Endothelial cell of umbilical vein (primary cell): ENCODE measurements at regions of chr6 and their contacts with region 1.

Region 1: DNA sequence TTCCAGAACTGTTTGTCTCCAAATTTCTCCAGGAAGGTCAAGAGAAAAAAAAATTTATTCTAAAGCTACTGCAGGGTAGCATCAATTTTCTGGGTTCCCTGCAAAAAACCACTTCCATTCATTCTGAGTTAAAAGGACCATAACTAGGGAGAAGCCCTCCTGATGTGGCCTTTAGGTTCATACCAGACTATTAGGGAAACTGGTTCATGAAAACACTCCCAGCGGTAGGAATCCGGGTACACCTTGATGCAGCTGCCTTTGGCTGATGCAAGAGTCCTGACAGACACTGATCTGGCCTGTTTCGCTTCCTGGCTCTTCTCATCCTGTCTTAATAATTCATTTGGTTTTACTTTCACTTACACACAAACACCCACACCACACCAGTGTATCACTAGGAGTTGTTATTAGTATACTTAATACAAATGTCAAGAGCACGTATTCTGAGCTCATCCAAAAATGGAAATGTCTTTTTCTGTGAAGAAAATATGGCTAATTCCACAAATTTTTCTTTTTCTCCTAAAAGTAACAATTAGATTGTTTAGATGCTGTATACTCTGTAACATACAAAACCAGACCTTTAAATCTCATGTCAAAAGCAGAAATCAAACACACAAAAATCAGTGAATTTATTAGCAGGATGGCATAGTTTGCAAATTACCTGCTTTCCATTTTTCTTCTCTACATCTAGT is 38.4 kb upstream of the ARHGAP18 start:
- DNase-seq: peak; percentile 28
- H3K4me3 ChIP-seq: no peak overlapping the region
- H3K27ac ChIP-seq: peak overlapping the region; percentile 80
- H3K4me1 ChIP-seq: peaks cover 53% of the 10 kb centered on the region
- H3K27me3 ChIP-seq: no peaks in the 10 kb centered on the region
- CTCF ChIP-seq: no peak
- POLR2A ChIP-seq: no peak

Region 2: GRCh38 chr6:129490521-129491245 is 257.7 kb before region 1 on chr6:
- CTCF ChIA-PET with region 1: no interaction called
- POLR2A ChIA-PET with region 1: no interaction called
- dilution Hi-C with region 1: no loop called
- intact Hi-C with region 1: loop called (anchors 2 kb)
- DNase-seq: peak; percentile 95
- H3K4me3 ChIP-seq: peak overlapping the region; percentile 11 to 83 (median 41)
- H3K27ac ChIP-seq: peak overlapping the region; percentile 99
- H3K4me1 ChIP-seq: peaks cover 51% of the 10 kb centered on the region
- H3K27me3 ChIP-seq: no peaks in the 10 kb centered on the region
- CTCF ChIP-seq: no peak
- POLR2A ChIP-seq: peak; percentile 81

Region 3: DNA sequence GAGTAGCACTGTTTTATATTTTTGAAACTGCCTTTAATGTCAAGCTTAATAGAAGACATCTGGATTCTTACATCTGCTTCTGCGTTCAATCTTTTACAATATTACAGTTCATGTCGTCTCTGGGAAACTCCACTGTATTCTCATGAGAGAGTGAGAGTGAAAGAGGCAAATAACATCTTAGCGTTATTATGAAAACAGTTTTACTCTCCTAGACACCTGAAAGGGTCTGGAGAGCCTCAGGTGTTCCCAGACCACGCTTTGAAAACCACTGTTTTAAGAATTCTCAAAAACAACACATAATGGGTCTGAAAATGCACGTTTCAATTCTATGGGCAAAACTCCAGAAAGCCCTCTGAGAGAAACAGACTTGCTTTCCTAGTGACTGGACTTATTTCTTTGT is 101.7 kb before region 1 on chr6:
- CTCF ChIA-PET with region 1: no interaction called
- POLR2A ChIA-PET with region 1: no interaction called
- dilution Hi-C with region 1: no loop called
- intact Hi-C with region 1: loop called (anchors 1 kb)
- DNase-seq: no peak
- H3K4me3 ChIP-seq: no peak overlapping the region
- H3K27ac ChIP-seq: peak overlapping the region; percentile 98
- H3K4me1 ChIP-seq: peaks cover 81% of the 10 kb centered on the region
- H3K27me3 ChIP-seq: no peaks in the 10 kb centered on the region
- CTCF ChIP-seq: no peak
- POLR2A ChIP-seq: no peak

Region 4: GRCh38 chr6:129709769-129710449 is 38.4 kb before region 1 on chr6 and contains the start of gene ARHGAP18:
- CTCF ChIA-PET with region 1: interaction called, 9 read pairs
- POLR2A ChIA-PET with region 1: interaction called, 4 read pairs
- dilution Hi-C with region 1: no loop called
- intact Hi-C with region 1: loop called (anchors 1 kb)
- DNase-seq: peak; percentile 97
- H3K4me3 ChIP-seq: peak within 1 kb of the TSS; percentile 60 to 90 (median 90)
- H3K27ac ChIP-seq: peak within 1 kb of the TSS; percentile 63
- H3K4me1 ChIP-seq: peaks cover 44% of the 10 kb centered on the region
- H3K27me3 ChIP-seq: no peaks in the 10 kb centered on the region
- CTCF ChIP-seq: no peak
- POLR2A ChIP-seq: peak; percentile 81
- total RNA-seq, gene ARHGAP18: 86.1 and 111 TPM in 2 replicates

Region 5: DNA sequence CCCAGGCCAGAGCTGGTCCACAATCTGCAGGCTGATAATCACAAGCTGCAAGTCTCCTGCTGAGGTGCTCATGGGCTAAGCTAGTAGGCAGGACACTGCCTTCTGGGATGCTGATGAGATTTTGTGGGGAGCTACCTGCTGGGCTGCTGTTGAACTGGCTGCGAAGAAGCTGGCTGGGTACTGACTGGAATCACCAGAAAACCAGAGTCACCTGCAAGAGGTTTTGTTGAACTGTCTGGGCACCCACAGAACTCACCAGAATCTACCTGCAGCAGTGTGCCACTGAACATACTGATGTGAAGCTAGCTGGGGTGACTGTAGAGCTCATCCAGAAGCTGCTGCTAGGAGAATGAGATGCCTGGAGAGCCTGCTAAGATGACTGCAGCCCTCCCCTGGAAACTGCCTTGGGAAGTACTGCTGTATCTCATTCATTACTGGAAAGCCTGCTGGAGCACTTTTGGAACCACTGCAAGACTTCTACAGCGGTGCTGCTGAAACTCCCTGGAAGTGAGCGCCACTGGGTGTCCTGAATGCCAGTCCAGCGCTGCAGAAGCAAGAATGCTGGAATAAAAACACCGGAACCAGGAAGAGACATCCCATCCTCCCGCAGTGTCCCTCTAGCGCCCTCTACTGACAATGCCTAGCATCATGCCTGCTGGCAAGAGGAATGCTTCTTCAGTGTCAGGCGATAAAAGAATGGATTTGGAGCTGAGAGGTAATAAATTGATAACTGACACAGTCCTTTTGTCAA is 26.5 kb after region 1 on chr6:
- CTCF ChIA-PET with region 1: interaction called, 16 read pairs
- POLR2A ChIA-PET with region 1: no interaction called
- dilution Hi-C with region 1: no loop called
- intact Hi-C with region 1: no loop called
- DNase-seq: peak; percentile 76
- H3K4me3 ChIP-seq: no peak overlapping the region
- H3K27ac ChIP-seq: no peak overlapping the region
- H3K4me1 ChIP-seq: no peaks in the 10 kb centered on the region
- H3K27me3 ChIP-seq: no peaks in the 10 kb centered on the region
- CTCF ChIP-seq: peak; percentile 91 to 96
- POLR2A ChIP-seq: no peak

Region 6: GRCh38 chr6:129785047-129785755 is 36.8 kb after region 1 on chr6:
- CTCF ChIA-PET with region 1: no interaction called
- POLR2A ChIA-PET with region 1: no interaction called
- dilution Hi-C with region 1: no loop called
- intact Hi-C with region 1: no loop called
- DNase-seq: no peak
- H3K4me3 ChIP-seq: no peak overlapping the region
- H3K27ac ChIP-seq: no peak overlapping the region
- H3K4me1 ChIP-seq: no peaks in the 10 kb centered on the region
- H3K27me3 ChIP-seq: peaks cover 0 to 1% of the 10 kb centered on the region in 2 experiments
- CTCF ChIP-seq: no peak
- POLR2A ChIP-seq: no peak